GM12878 (cell line): ENCODE measurements at regions of chr19 and their contacts with region 1.

Region 1: GRCh38 chr19:10864538-10864899 is 6.8 kb upstream of the CARM1 start:
- DNase-seq: no peak
- ATAC-seq: peak; percentile 83
- H3K4me3 ChIP-seq: no peak overlapping the region
- H3K27ac ChIP-seq: no peak overlapping the region
- H3K4me1 ChIP-seq: peaks cover 16% of the 10 kb centered on the region
- H3K27me3 ChIP-seq: no peaks in the 10 kb centered on the region
- CTCF ChIP-seq: peak; percentile 88 to 96 (median 94)
- EP300 ChIP-seq: no peak
- POLR2A ChIP-seq: no peak
- RAD21 ChIP-seq: peak; percentile 71

Region 2: GRCh38 chr19:10106100-10106936 is 758.2 kb before region 1 on chr19 and contains the start of gene PPAN:
- CTCF ChIA-PET with region 1: no interaction called
- POLR2A ChIA-PET with region 1: no interaction called
- RAD21 ChIA-PET with region 1: no interaction called
- SMC1A ChIA-PET with region 1: no interaction called
- in situ Hi-C with region 1: no loop called
- intact Hi-C with region 1: no loop called
- DNase-seq: peak; percentile 93
- ATAC-seq: peak; percentile 61
- H3K4me3 ChIP-seq: peak within 1 kb of the TSS; percentile 79
- H3K27ac ChIP-seq: peak within 1 kb of the TSS; percentile 100
- H3K4me1 ChIP-seq: peaks cover 54% of the 10 kb centered on the region
- H3K27me3 ChIP-seq: no peaks in the 10 kb centered on the region
- CTCF ChIP-seq: no peak
- EP300 ChIP-seq: no peak
- POLR2A ChIP-seq: peak; percentile 95
- RAD21 ChIP-seq: no peak
- polyA plus RNA-seq, gene PPAN: 2.1 to 7.6 TPM

Region 3: GRCh38 chr19:10701955-10702525 is 162.5 kb before region 1 on chr19:
- CTCF ChIA-PET with region 1: interaction called, 66 read pairs
- POLR2A ChIA-PET with region 1: interaction called, 4 read pairs
- RAD21 ChIA-PET with region 1: interaction called, 38 read pairs
- SMC1A ChIA-PET with region 1: interaction called, 17 read pairs
- in situ Hi-C with region 1: no loop called
- intact Hi-C with region 1: no loop called
- DNase-seq: no peak
- ATAC-seq: peak; percentile 62
- H3K4me3 ChIP-seq: peak overlapping the region; percentile 87
- H3K27ac ChIP-seq: peak overlapping the region; percentile 73
- H3K4me1 ChIP-seq: no peaks in the 10 kb centered on the region
- H3K27me3 ChIP-seq: no peaks in the 10 kb centered on the region
- CTCF ChIP-seq: peak in 2 of 3 experiments; percentile 28 to 41; a peak in 2 of 6 replicates
- EP300 ChIP-seq: no peak
- POLR2A ChIP-seq: no peak
- RAD21 ChIP-seq: peak; percentile 13; the same call in 1 of the 2 replicates

Region 4: DNA sequence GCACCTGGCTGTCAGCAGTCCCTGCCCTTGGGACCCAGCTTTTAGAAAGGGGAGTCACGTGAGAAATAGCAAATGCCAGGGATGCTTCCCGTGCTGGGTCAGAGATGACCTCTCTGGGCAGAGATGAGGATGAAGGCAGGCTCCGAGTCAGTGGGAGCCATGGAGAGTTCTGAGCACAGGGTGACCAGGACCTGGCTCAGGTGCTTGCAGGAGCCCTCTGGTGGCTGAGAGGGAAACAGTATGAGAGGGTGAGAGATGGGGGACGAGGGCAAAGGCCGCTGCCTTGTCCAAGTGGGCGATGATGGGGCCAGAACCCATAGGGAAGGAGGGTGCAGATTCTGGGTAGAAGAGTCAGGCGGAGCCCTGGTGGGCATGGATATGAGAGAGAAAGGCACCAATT is 44.3 kb before region 1 on chr19:
- CTCF ChIA-PET with region 1: interaction called, 10 read pairs
- POLR2A ChIA-PET with region 1: no interaction called
- RAD21 ChIA-PET with region 1: interaction called, 3 read pairs
- SMC1A ChIA-PET with region 1: no interaction called
- in situ Hi-C with region 1: no loop called
- intact Hi-C with region 1: no loop called
- DNase-seq: no peak
- ATAC-seq: peak; percentile 63
- H3K4me3 ChIP-seq: no peak overlapping the region
- H3K27ac ChIP-seq: no peak overlapping the region
- H3K4me1 ChIP-seq: no peaks in the 10 kb centered on the region
- H3K27me3 ChIP-seq: no peaks in the 10 kb centered on the region
- CTCF ChIP-seq: peak; percentile 25 to 43 (median 34); a peak in 3 of 6 replicates
- EP300 ChIP-seq: no peak
- POLR2A ChIP-seq: no peak
- RAD21 ChIP-seq: peak; percentile 26; the same call in 1 of the 2 replicates

Region 5: GRCh38 chr19:10835754-10836477 is 28.6 kb before region 1 on chr19 and contains the start of gene TMED1:
- CTCF ChIA-PET with region 1: interaction called, 68 read pairs
- POLR2A ChIA-PET with region 1: interaction called, 8 read pairs
- RAD21 ChIA-PET with region 1: interaction called, 32 read pairs
- SMC1A ChIA-PET with region 1: interaction called, 24 read pairs
- in situ Hi-C with region 1: no loop called
- intact Hi-C with region 1: no loop called
- DNase-seq: peak; percentile 91
- ATAC-seq: peak; percentile 98
- H3K4me3 ChIP-seq: peak within 1 kb of the TSS; percentile 78
- H3K27ac ChIP-seq: peak within 1 kb of the TSS; percentile 89
- H3K4me1 ChIP-seq: peaks cover 12% of the 10 kb centered on the region
- H3K27me3 ChIP-seq: no peaks in the 10 kb centered on the region
- CTCF ChIP-seq: peak in 1 of 3 experiments; percentile 42; a peak in 1 of 6 replicates
- EP300 ChIP-seq: no peak
- POLR2A ChIP-seq: peak; percentile 86
- RAD21 ChIP-seq: no peak
- polyA plus RNA-seq, gene TMED1: 0.60 to 2.8 TPM

Region 6: GRCh38 chr19:10848230-10848856 is 16.2 kb before region 1 on chr19 and contains the start of gene C19orf38:
- CTCF ChIA-PET with region 1: interaction called, 42 read pairs
- POLR2A ChIA-PET with region 1: interaction called, 3 read pairs
- RAD21 ChIA-PET with region 1: interaction called, 8 read pairs
- SMC1A ChIA-PET with region 1: interaction called, 7 read pairs
- in situ Hi-C with region 1: no loop called
- intact Hi-C with region 1: no loop called
- DNase-seq: no peak
- ATAC-seq: peak; percentile 87
- H3K4me3 ChIP-seq: peak within 1 kb of the TSS; percentile 3; the same call in 1 of the 2 replicates
- H3K27ac ChIP-seq: no peak within 1 kb of the TSS; the same call in 1 of the 2 replicates
- H3K4me1 ChIP-seq: peaks cover 9% of the 10 kb centered on the region
- H3K27me3 ChIP-seq: no peaks in the 10 kb centered on the region
- CTCF ChIP-seq: no peak
- EP300 ChIP-seq: no peak
- POLR2A ChIP-seq: no peak
- RAD21 ChIP-seq: no peak
- polyA plus RNA-seq, gene C19orf38: 2.6 to 4.8 TPM

Region 7: GRCh38 chr19:10876459-10877240 is 12.1 kb after region 1 on chr19:
- CTCF ChIA-PET with region 1: interaction called, 24 read pairs
- POLR2A ChIA-PET with region 1: interaction called, 5 read pairs
- RAD21 ChIA-PET with region 1: interaction called, 6 read pairs
- SMC1A ChIA-PET with region 1: interaction called, 14 read pairs
- in situ Hi-C with region 1: no loop called
- intact Hi-C with region 1: no loop called
- DNase-seq: peak; percentile 79
- ATAC-seq: peak; percentile 80
- H3K4me3 ChIP-seq: peak overlapping the region; percentile 60
- H3K27ac ChIP-seq: peak overlapping the region; percentile 97
- H3K4me1 ChIP-seq: peaks cover 57% of the 10 kb centered on the region
- H3K27me3 ChIP-seq: no peaks in the 10 kb centered on the region
- CTCF ChIP-seq: no peak
- EP300 ChIP-seq: peak; percentile 61 to 96; a peak in 3 of 4 replicates
- POLR2A ChIP-seq: peak; percentile 64; the same call in 1 of the 2 replicates
- RAD21 ChIP-seq: no peak

Region 8: GRCh38 chr19:10896580-10897526 is 32.3 kb after region 1 on chr19:
- CTCF ChIA-PET with region 1: no interaction called
- POLR2A ChIA-PET with region 1: no interaction called
- RAD21 ChIA-PET with region 1: no interaction called
- SMC1A ChIA-PET with region 1: no interaction called
- in situ Hi-C with region 1: no loop called
- intact Hi-C with region 1: no loop called
- DNase-seq: no peak
- ATAC-seq: no peak
- H3K4me3 ChIP-seq: no peak overlapping the region
- H3K27ac ChIP-seq: no peak overlapping the region
- H3K4me1 ChIP-seq: peaks cover 4% of the 10 kb centered on the region; the same call in 1 of the 2 replicates
- H3K27me3 ChIP-seq: no peaks in the 10 kb centered on the region
- CTCF ChIP-seq: no peak
- EP300 ChIP-seq: no peak
- POLR2A ChIP-seq: no peak
- RAD21 ChIP-seq: no peak

Region 9: DNA sequence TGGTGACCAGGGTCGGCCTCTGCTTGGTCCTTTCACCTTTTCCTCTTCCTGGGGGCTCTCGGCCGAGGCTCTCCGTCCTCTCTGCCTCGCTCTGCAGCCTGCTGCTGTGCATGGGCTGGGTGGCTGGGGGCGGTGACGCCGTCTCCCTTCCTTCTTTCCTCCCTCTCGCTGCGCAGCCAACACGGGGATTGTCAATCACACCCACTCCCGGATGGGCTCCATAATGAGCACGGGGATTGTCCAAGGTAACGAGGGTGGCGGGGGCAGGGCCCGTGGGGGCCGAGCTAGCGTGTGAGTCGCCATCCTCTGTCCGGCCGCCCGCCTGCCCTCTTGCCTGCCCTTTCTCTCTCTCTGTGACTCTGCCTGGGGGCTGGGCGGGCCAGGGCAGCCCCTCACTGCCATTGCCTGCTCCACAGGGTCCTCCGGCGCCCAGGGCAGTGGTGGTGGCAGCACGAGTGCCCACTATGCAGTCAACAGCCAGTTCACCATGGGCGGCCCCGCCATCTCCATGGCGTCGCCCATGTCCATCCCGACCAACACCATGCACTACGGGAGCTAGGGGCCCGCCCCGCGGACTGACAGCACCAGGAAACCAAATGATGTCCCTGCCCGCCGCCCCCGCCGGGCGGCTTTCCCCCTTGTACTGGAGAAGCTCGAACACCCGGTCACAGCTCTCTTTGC is 56.8 kb after region 1 on chr19:
- CTCF ChIA-PET with region 1: no interaction called
- POLR2A ChIA-PET with region 1: no interaction called
- RAD21 ChIA-PET with region 1: no interaction called
- SMC1A ChIA-PET with region 1: no interaction called
- in situ Hi-C with region 1: no loop called
- intact Hi-C with region 1: no loop called
- DNase-seq: no peak
- ATAC-seq: no peak
- H3K4me3 ChIP-seq: no peak overlapping the region
- H3K27ac ChIP-seq: no peak overlapping the region
- H3K4me1 ChIP-seq: no peaks in the 10 kb centered on the region
- H3K27me3 ChIP-seq: no peaks in the 10 kb centered on the region
- CTCF ChIP-seq: no peak
- EP300 ChIP-seq: no peak
- POLR2A ChIP-seq: peak; percentile 55
- RAD21 ChIP-seq: no peak